MCF 10A (cell line): ENCODE measurements at regions of chr19 and their contacts with region 1.

Region 1: DNA sequence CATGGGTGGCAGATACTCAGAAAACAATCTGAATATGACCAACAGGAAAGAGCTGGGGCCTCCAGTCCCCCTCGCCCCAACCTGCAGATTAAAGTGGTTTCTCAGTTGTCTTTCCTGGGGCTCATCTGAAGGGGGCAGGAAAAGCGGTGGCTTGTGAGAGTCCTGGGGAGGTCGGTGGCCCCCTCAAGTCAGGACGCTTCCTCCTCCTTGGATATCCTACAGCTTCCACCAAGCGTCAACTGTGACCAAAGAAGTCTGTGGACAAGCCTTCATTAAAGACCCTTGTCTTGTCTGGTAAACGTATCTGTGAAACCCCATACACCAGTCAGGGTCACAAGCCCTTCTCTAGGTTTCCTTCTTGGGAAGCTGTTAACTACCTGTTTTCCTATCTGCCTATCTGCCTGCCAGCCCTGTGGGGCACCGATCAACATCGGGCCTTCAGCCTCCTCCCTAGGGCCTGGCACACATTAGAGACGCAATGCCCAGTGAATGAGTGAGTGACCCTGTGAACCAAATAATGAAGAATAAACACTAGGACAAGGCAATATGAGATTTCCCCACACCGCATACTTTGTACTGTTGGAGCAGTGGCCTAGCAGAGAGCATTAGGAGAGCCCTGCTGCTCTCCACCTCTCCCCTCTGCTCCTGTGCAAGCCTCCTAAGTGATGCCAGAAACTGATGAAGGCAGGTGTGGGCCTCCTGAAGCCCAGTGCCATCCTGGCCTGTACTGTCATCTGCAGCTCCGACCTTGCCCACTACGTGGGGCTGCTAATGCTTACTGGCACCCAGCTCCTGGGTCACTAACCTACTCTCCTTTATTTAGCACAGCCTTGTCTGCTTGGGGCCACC is 1317.8 kb downstream of the UQCRFS1 start:
- DNase-seq: no peak
- H3K4me3 Mint-ChIP-seq: no peak overlapping the region
- H3K27ac Mint-ChIP-seq: no peak overlapping the region
- H3K4me1 Mint-ChIP-seq: no peaks in the 10 kb centered on the region
- H3K27me3 Mint-ChIP-seq: no peaks in the 10 kb centered on the region
- CTCF ChIP-seq: no peak

Region 2: GRCh38 chr19:27935669-27936068 is 40.5 kb after region 1 on chr19:
- CTCF ChIA-PET with region 1: no interaction called
- POLR2A ChIA-PET with region 1: no interaction called
- intact Hi-C with region 1: loop called (anchors 2 kb)
- DNase-seq: no peak
- H3K4me3 Mint-ChIP-seq: no peak overlapping the region
- H3K27ac Mint-ChIP-seq: no peak overlapping the region
- H3K4me1 Mint-ChIP-seq: no peaks in the 10 kb centered on the region
- H3K27me3 Mint-ChIP-seq: no peaks in the 10 kb centered on the region
- CTCF ChIP-seq: no peak

Region 3: DNA sequence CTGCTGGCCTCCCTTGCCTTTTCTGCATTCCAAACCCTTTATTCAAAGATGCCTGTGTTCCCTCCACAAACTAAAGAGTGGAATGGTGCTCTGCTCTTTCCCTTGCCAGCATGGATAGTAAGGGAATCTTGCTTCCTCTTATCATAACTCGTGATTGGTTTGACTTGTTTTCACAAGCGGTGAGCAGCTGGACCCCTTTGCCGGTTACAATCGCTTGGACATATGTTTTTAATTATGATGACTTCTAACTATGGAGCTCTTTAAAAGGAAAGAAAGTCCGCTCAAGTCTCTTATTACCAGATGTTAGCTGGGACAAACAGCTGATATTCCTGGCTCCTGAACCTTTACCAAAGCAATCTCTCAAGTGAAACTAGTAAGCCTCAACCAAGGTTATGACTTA is 223.1 kb after region 1 on chr19:
- CTCF ChIA-PET with region 1: no interaction called
- POLR2A ChIA-PET with region 1: no interaction called
- intact Hi-C with region 1: no loop called
- DNase-seq: no peak
- H3K4me3 Mint-ChIP-seq: no peak overlapping the region
- H3K27ac Mint-ChIP-seq: no peak overlapping the region
- H3K4me1 Mint-ChIP-seq: no peaks in the 10 kb centered on the region
- H3K27me3 Mint-ChIP-seq: no peaks in the 10 kb centered on the region
- CTCF ChIP-seq: no peak